GM10248 (cell line): ENCODE measurements at regions of chr19 and their contacts with region 1.

Region 1: DNA sequence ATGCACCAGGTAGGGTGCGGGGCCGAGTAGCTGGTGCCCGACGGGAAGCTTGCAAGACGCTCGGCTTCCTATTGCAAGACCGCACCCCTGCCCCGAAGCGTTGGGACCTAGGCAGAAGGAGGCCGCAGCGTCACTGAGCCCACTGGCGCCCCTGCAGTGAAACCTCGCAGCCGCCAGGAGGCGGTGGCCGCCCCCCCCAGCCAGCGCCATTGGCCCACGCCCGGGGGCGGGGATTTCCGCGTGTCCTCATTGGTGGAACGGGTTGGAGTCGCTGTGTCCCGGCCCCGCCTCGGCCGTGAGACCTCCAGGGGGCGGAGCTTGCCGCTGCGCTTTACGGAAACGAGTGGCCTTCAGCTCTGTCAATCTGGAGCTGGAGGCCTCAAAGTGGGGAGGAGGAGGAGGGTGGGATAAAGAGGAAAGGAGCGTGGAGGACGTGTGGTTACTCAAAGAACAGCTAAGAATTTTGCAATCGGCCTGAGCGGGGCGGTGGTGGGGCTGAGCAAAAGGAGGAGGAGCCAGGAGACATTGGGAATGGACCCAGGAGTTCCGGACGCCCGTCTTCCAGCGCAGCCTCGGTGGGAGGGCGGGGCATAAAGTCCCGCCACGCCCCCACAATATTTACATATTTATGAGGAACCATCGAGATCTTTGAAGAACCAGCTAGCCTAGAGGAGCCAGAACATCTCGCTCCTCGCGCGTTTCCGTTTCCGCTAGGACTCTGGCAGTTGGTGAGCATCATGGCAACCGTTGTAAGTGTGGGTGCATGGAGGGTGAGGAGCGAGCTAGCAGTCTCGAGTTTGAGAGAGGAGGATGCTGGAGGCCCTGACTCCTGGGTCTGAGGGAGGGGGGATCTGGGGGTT is at the starts of genes GYS1 and RUVBL2:
- DNase-seq: peak; percentile 99
- CTCF ChIP-seq: peak; percentile 91

Region 2: DNA sequence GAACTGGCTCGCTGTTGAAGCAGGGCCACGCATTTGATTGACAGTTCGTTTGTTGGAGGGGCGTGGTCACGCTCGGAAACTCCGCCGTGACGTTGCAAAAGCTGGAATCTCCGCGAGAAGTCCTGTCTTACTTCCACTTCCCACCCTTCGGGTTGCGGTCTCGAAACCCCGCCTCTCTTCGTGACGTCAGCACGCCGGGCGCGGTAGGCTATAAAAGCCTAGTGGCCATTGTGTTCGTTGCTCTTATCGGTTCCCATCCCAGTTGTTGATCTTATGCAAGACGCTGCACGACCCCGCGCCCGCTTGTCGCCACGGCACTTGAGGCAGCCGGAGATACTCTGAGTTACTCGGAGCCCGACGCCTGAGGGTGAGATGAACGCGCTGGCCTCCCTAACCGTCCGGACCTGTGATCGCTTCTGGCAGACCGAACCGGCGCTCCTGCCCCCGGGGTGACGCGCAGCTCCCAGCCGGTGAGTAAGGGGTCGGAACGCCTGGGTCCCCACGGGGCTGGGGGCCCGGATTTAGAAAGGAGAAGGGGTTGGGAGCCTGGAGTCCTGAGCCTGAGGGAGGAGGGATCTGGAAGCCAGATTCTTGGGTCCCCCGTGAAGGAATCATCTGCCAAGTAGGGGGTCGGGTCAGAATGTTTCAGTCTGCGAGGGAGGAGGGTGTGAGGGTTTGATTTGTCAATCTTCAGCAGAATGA is 121.1 kb before region 1 on chr19 and contains the start of gene PPP1R15A:
- CTCF ChIA-PET with region 1: interaction called, 5 read pairs
- POLR2A ChIA-PET with region 1: interaction called, 25 read pairs
- DNase-seq: peak; percentile 97
- CTCF ChIP-seq: no peak

Region 3: GRCh38 chr19:48970923-48971395 is 22.4 kb before region 1 on chr19:
- CTCF ChIA-PET with region 1: interaction called, 129 read pairs
- POLR2A ChIA-PET with region 1: interaction called, 29 read pairs
- DNase-seq: peak; percentile 77
- CTCF ChIP-seq: peak; percentile 93

Region 4: DNA sequence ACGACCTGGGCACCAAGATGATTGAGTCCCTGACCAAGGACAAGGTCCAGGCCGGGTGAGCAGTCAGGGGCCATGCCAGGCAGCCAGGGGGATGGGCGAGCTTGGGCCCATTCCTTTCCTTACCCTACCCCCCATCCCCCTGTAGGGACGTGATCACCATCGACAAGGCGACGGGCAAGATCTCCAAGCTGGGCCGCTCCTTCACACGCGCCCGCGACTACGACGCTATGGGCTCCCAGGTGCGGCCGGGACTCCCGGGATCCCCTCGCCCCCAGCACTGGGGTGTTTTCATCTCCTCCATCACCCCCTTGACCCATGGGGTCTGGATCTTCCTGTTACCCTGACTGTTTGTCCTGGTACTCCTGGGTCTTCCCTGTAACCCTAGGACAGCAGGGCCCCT is 16.4 kb after region 1 on chr19:
- CTCF ChIA-PET with region 1: interaction called, 45 read pairs
- POLR2A ChIA-PET with region 1: interaction called, 13 read pairs
- DNase-seq: no peak
- CTCF ChIP-seq: no peak

Region 5: GRCh38 chr19:49200238-49200862 is 206.9 kb after region 1 on chr19:
- CTCF ChIA-PET with region 1: interaction called, 10 read pairs
- POLR2A ChIA-PET with region 1: no interaction called
- DNase-seq: no peak
- CTCF ChIP-seq: no peak